IMR-90 (cell line): ENCODE measurements at regions of chr4 and their contacts with region 1.

Region 1: DNA sequence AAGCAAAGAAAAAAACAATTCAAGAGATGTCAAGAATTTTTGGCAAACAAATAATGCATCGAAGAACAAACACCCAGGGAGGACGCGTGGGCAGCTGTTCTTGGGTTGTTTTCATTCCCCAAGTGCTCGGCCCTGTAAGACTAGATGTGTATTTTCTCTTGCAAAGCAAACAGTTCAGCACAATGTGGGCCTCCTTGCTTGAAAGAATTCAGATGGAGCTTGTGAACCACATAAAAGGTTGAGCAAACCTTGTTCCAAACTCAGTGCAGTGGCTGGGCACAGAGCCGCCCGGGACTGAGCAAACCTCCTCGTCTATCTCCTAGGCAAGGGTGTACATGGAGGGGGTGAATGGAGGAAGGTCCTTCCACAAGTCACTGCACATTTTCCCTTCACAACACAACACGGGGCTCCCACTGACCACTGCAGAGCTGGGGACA is 82.4 kb downstream of the HTRA3 start:
- DNase-seq: peak; percentile 39
- ATAC-seq: peak; percentile 74
- H3K4me3 ChIP-seq: no peak overlapping the region
- H3K27ac ChIP-seq: peak overlapping the region; percentile 42; the same call in 1 of the 2 replicates
- H3K4me1 ChIP-seq: peaks cover 16% of the 10 kb centered on the region
- H3K27me3 ChIP-seq: peaks cover 19% of the 10 kb centered on the region
- CTCF ChIP-seq: no peak
- POLR2A ChIP-seq: no peak
- RAD21 ChIP-seq: no peak

Region 2: DNA sequence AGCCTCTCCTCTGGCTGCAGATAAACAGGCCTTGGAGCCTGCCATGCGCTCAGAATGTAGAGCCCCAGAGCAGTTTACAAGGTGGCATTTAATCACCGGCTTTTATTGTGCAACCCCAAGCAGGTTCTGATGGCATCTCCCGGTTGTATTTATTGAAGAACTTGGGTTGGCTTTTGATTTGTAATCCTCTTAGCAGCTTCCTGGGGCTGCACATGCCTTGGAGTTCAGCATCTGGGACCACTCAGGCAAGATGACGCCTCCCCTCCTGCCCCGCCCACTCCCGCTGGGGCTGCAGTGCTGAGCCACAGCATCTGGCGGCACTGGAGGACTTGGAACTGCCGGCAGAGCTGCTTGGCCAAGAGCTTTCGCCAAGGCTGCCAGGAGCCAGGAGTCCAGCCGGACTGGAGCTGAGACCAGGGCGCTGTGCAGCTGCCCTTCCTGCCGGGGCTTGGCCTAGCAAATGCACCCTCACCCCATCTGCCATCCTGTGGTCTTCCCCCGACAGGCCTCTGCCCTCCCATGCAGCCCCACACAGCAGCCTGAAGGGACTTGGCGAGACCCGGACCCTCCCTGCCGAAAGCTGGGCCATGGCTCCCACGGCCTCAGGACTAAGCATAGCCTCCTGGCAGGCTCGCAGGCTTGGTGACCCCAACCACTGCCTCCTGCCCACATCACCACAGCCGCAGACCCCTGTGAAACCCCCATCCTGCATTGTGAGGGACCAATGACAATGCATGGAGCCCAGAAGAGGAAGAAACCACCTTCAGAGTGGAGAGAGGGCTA is 77.0 kb before region 1 on chr4:
- CTCF ChIA-PET with region 1: no interaction called
- POLR2A ChIA-PET with region 1: no interaction called
- dilution Hi-C with region 1: no loop called
- in situ Hi-C with region 1: no loop called
- intact Hi-C with region 1: loop called (anchors 5 kb)
- DNase-seq: peak; percentile 93
- ATAC-seq: peak; percentile 77
- H3K4me3 ChIP-seq: no peak overlapping the region
- H3K27ac ChIP-seq: peak overlapping the region; percentile 36
- H3K4me1 ChIP-seq: peaks cover 41% of the 10 kb centered on the region
- H3K27me3 ChIP-seq: peaks cover 9% of the 10 kb centered on the region
- CTCF ChIP-seq: peak; percentile 76
- POLR2A ChIP-seq: no peak
- RAD21 ChIP-seq: peak; percentile 90

Region 3: GRCh38 chr4:8340781-8341241 is 11.1 kb before region 1 on chr4:
- CTCF ChIA-PET with region 1: no interaction called
- POLR2A ChIA-PET with region 1: no interaction called
- dilution Hi-C with region 1: no loop called
- in situ Hi-C with region 1: no loop called
- intact Hi-C with region 1: no loop called
- DNase-seq: no peak
- ATAC-seq: no peak
- H3K4me3 ChIP-seq: no peak overlapping the region
- H3K27ac ChIP-seq: no peak overlapping the region
- H3K4me1 ChIP-seq: peaks cover 4% of the 10 kb centered on the region; the same call in 1 of the 2 replicates
- H3K27me3 ChIP-seq: peaks cover 5% of the 10 kb centered on the region; the same call in 1 of the 2 replicates
- CTCF ChIP-seq: no peak
- POLR2A ChIP-seq: no peak
- RAD21 ChIP-seq: no peak